Activated naive CD4-positive, alpha-beta T cell treated with anti-CD3 and anti-CD28 coated beads for 36 hours (primary cell): ENCODE measurements at regions of chr3 and their contacts with region 1.

Region 1: DNA sequence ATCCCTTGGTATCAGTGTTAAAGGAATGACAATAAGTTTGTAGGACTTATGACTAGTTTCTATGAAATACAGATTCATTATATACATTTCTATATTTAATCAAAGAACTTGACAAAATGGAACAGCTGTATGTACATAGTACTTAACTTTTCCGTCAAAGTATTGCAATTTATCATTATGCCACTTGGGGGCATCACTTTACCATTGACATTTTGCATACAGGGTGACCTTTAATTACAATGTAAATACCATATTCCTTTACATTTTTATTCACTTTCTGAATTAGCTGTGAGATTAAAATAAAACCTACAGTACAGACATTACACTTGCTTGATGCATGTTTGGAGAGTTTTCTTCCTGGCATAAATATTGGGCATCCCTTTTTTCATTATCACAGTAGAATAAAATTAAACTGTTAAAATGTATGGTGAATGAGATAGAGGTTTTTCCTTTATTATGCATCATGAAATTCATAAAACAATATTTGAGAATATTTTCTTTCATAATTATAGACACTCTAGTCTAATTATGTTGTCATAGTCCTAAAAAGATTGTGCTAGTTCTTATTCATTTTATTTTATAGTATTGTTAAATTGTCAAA is 6.9 kb downstream of the NEK11 start:
- DNase-seq: peak; percentile 22
- H3K4me3 Mint-ChIP-seq: no peak overlapping the region
- H3K27ac Mint-ChIP-seq: no peak overlapping the region
- H3K4me1 Mint-ChIP-seq: no peaks in the 10 kb centered on the region
- H3K27me3 Mint-ChIP-seq: no peaks in the 10 kb centered on the region

Region 2: DNA sequence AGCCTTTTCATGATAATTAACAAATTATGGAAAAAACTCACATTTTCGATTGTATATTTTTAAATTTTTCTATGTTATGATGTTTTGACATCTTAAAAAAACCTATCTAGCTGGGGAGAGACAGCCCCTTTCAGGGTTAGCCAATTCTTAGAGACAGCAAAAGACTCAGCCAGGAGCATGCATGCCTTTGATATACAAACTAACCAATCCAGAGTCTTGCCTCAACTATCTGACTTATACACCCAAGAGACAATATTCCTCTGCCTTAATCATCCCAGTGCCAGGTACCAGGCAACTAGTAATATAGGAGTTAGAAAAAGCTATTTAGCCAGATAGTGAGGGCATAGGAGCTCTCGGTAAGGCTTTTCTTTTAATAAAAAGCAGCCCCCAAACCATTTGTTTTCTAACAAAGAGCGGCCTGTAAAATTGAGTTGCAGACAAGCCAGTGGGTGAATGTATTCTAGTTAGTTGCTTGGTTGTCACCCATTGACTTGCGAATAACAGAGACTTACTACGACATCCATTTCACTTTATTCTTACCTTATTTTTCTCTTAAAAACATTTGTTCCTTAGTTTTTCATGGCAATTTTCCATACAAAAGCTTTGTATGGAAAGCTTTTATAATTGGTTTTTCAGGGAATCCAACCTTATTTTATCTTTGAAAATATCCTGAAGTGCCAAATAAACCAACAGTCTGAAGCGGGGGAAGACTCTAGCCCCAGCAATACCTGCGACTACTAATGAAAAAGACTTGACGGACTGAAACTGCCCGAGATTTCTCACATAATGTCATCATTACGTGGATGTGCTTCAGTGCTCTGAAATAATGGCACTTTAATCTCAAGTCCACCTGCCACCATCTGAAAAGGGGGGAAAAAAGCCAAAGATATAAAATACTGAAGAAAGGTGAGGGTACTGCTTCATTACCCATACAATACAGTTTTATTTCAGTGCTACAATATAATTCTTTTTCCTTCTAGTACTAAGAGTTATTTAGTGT is 204.3 kb before region 1 on chr3:
- CTCF ChIA-PET with region 1: no interaction called
- intact Hi-C with region 1: no loop called
- DNase-seq: no peak
- H3K4me3 Mint-ChIP-seq: no peak overlapping the region
- H3K27ac Mint-ChIP-seq: no peak overlapping the region
- H3K4me1 Mint-ChIP-seq: no peaks in the 10 kb centered on the region
- H3K27me3 Mint-ChIP-seq: no peaks in the 10 kb centered on the region

Region 3: DNA sequence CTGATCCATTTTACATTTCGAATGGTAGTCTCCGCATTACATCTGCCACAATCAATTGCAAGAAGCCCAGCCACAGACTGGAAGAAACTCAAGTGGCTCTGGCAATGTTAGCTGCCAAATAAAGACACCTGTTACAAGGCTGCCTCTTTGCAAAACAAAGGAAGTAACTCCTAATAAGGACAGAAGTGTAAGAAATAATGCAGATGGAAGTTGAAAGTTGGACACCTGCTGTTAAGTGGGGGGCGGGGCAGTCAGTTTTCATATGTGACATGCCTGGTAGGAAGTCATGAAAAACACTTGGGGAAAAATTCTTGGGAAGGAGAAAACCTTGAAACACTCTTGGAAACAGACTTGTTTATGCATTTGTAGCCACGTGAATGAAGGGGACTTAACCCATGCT is 193.8 kb before region 1 on chr3:
- CTCF ChIA-PET with region 1: no interaction called
- intact Hi-C with region 1: no loop called
- DNase-seq: no peak
- H3K4me3 Mint-ChIP-seq: no peak overlapping the region
- H3K27ac Mint-ChIP-seq: no peak overlapping the region
- H3K4me1 Mint-ChIP-seq: peaks cover 5% of the 10 kb centered on the region
- H3K27me3 Mint-ChIP-seq: peaks cover 4% of the 10 kb centered on the region

Region 4: DNA sequence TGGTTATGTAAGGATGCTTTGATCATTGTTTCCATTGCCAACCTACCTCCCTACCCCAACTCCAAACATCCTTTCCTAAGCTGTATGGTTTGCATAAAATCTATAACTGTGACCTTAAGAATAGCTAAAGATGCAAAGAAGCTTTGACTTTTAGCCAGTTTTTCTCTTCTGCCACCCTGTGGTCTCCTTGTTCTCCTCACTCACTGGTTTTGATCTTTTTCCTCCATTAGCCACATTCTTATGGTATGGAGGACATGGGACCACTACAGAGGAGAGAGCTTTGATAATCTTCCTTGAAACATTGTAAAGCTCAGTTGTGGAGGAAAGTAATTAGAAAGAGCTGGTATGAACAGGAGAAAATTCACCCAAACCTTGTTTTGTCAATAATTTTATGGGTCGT is 109.0 kb after region 1 on chr3:
- CTCF ChIA-PET with region 1: interaction called, 7 read pairs
- intact Hi-C with region 1: loop called (anchors 5 kb)
- DNase-seq: no peak
- H3K4me3 Mint-ChIP-seq: no peak overlapping the region
- H3K27ac Mint-ChIP-seq: no peak overlapping the region
- H3K4me1 Mint-ChIP-seq: no peaks in the 10 kb centered on the region
- H3K27me3 Mint-ChIP-seq: no peaks in the 10 kb centered on the region

Region 5: GRCh38 chr3:131794766-131795388 is 761.3 kb after region 1 on chr3:
- CTCF ChIA-PET with region 1: interaction called, 3 read pairs
- intact Hi-C with region 1: loop called (anchors 1 kb)
- DNase-seq: peak; percentile 43
- H3K4me3 Mint-ChIP-seq: no peak overlapping the region
- H3K27ac Mint-ChIP-seq: no peak overlapping the region
- H3K4me1 Mint-ChIP-seq: peaks cover 8% of the 10 kb centered on the region
- H3K27me3 Mint-ChIP-seq: peaks cover 13% of the 10 kb centered on the region